ENCODE measurements at regions of chrX and their contacts with region 1.

Region 1: DNA sequence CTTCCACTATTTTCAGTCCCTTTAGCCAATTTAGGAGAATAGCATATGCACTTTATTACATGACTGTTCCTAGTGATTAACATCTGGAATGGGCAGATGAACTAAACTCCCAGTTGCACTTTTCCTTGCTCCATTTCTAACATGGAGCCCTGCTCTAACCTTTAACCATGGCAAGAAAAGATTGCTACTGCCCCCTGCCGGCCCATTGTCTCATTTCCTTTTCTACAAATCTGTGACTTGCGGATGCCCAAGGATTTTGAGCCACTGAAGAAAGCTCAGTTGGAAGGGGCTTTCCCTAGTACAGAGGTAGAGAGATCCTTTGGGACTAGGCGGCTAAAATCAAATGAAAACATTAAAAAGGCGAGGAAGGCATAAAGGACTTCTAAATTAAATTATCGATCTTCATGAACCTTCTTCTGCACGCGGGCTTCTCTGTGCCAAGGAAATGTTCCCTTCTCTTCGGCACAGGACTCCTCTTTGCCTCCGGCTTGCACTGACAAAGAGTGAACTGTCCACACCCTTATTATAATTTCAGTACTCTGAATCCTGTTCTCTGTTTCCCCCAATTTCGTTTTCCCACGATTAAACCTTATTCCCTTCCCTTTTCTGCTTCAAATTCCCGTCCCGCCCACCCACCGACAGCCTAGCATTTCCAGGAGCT is 577 bp upstream of the GLRA2 start:
- DNase-seq: peak in 1 of 2 donors; percentile 46
- ATAC-seq: no peak
- H3K4me3 ChIP-seq: no peak overlapping the region
- H3K4me3 Mint-ChIP-seq: no peak overlapping the region
- H3K27ac ChIP-seq: no peak overlapping the region
- H3K27ac Mint-ChIP-seq: no peak overlapping the region
- H3K4me1 ChIP-seq: no peaks in the 10 kb centered on the region
- H3K4me1 Mint-ChIP-seq: peaks cover 0 to 5% of the 10 kb centered on the region in 2 donors
- H3K27me3 ChIP-seq: no peaks in the 10 kb centered on the region
- H3K27me3 Mint-ChIP-seq: peaks cover 0 to 7% of the 10 kb centered on the region in 2 donors
- CTCF ChIP-seq: no peak

Region 2: DNA sequence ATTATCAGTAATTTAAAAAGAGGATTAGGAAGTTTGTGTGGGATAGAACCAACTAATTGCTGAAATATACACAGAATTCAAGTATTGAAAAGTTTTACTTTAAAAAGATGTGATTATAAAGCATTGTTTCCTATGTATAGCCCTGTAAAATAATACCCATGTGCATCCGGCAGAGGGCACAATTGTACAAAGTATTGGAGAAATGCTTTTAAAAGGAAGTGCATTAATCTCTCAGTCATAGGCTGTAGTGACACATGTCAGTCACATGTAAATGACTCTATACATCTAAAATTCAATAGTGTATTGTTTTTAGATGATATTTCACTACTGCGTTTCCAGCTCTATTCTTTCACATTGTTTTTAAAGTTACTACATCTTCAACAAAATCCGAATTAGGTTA is 489.4 kb before region 1 on chrX:
- intact Hi-C with region 1: loop called (anchors 5 kb)
- DNase-seq: peak in 1 of 2 donors; percentile 78
- ATAC-seq: peak; percentile 82 to 92 (median 84)
- H3K4me3 ChIP-seq: no peak overlapping the region
- H3K4me3 Mint-ChIP-seq: no peak overlapping the region
- H3K27ac ChIP-seq: no peak overlapping the region
- H3K27ac Mint-ChIP-seq: no peak overlapping the region
- H3K4me1 ChIP-seq: no peaks in the 10 kb centered on the region
- H3K4me1 Mint-ChIP-seq: no peaks in the 10 kb centered on the region
- H3K27me3 ChIP-seq: no peaks in the 10 kb centered on the region
- H3K27me3 Mint-ChIP-seq: peaks cover 10 to 48% of the 10 kb centered on the region in 2 donors
- CTCF ChIP-seq: peak; percentile 70

Region 3: DNA sequence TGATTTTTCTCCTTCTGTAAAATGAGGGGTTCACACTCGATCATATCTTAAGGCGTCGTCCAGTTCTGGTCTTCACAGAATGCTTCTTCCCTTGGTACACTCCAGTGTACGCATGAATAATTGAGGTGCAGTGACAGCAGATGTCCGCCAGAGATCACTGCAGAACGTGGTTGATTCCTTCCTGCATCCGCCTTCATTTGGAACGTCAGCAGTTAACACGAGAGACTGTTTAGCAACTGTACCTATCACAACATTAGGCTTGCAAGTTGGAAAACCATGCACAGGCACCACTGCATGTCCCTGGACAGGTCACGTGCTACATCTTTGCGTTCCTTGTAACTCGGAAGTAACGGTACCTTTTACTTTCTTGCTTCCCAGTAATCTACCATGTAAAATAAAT is 433.1 kb before region 1 on chrX:
- intact Hi-C with region 1: loop called (anchors 10 kb)
- DNase-seq: peak in 1 of 2 donors; percentile 65
- ATAC-seq: peak; percentile 55 to 73 (median 57)
- H3K4me3 ChIP-seq: no peak overlapping the region
- H3K4me3 Mint-ChIP-seq: peak overlapping the region; percentile 17
- H3K27ac ChIP-seq: no peak overlapping the region
- H3K27ac Mint-ChIP-seq: no peak overlapping the region
- H3K4me1 ChIP-seq: peaks cover 2% of the 10 kb centered on the region
- H3K4me1 Mint-ChIP-seq: no peaks in the 10 kb centered on the region
- H3K27me3 ChIP-seq: no peaks in the 10 kb centered on the region
- H3K27me3 Mint-ChIP-seq: peaks cover 0 to 18% of the 10 kb centered on the region in 2 donors
- CTCF ChIP-seq: no peak

Measured in natural killer cell (primary cell).